Calu3 (cell line): ENCODE measurements at regions of chr1 and their contacts with region 1.

Region 1: GRCh38 chr1:182781841-182782586 is 7.6 kb upstream of the NPL start:
- DNase-seq: peak; percentile 80
- H3K4me3 Mint-ChIP-seq: no peak overlapping the region
- H3K27ac Mint-ChIP-seq: no peak overlapping the region
- H3K4me1 Mint-ChIP-seq: peaks cover 10% of the 10 kb centered on the region
- H3K27me3 Mint-ChIP-seq: peaks cover 7% of the 10 kb centered on the region
- CTCF ChIP-seq: peak; percentile 83

Region 2: GRCh38 chr1:182446033-182446669 is 335.9 kb before region 1 on chr1:
- CTCF ChIA-PET with region 1: no interaction called
- intact Hi-C with region 1: loop called (anchors 1 kb)
- DNase-seq: peak; percentile 60
- H3K4me3 Mint-ChIP-seq: no peak overlapping the region
- H3K27ac Mint-ChIP-seq: no peak overlapping the region
- H3K4me1 Mint-ChIP-seq: no peaks in the 10 kb centered on the region
- H3K27me3 Mint-ChIP-seq: peaks cover 40% of the 10 kb centered on the region
- CTCF ChIP-seq: peak; percentile 55

Region 3: GRCh38 chr1:182604169-182605164 is 177.5 kb before region 1 on chr1 and contains the start of gene RGS16:
- CTCF ChIA-PET with region 1: interaction called, 226 read pairs
- intact Hi-C with region 1: loop called (anchors 1 kb)
- DNase-seq: peak; percentile 95
- H3K4me3 Mint-ChIP-seq: peak within 1 kb of the TSS; percentile 77
- H3K27ac Mint-ChIP-seq: no peak within 1 kb of the TSS
- H3K4me1 Mint-ChIP-seq: peaks cover 7% of the 10 kb centered on the region
- H3K27me3 Mint-ChIP-seq: peaks cover 30% of the 10 kb centered on the region
- CTCF ChIP-seq: no peak
- total RNA-seq, gene RGS16: 1.2 and 1.7 TPM in 2 replicates

Region 4: DNA sequence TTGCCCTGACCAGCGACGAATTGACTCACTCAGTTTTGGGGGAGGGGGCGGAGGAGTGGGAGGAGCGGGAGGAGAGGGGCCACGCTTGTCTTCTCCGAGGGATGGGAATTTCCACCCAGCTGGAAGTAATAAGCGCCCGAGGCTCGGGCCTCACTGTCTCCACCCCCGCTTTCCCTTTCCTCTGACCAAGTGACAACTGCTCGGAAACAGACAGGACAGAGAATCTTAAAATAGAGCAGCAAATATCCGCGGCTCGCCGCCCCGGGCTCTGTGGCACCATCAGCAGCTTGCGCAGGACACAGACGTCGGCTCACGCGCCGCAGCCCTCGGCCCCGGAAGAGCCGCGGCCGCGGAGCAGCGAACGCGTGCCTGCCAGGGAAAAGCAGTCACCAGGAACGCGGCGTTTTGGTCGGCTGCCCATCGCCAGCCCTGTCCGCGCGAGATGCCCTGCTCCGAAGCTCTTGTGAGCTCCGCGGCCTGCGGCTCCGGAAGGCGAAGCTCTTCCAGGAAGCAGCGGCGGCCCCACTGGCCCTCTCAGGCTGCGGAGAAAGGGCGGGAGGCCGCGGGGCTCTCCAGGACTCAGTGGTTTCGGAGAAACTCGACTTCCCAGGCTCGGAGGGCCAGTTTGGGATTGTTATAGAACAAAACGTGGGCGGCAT is 167.1 kb before region 1 on chr1:
- CTCF ChIA-PET with region 1: interaction called, 7 read pairs
- intact Hi-C with region 1: loop called (anchors 5 kb)
- DNase-seq: peak; percentile 46
- H3K4me3 Mint-ChIP-seq: peak overlapping the region; percentile 79
- H3K27ac Mint-ChIP-seq: no peak overlapping the region
- H3K4me1 Mint-ChIP-seq: peaks cover 34% of the 10 kb centered on the region
- H3K27me3 Mint-ChIP-seq: peaks cover 40% of the 10 kb centered on the region
- CTCF ChIP-seq: no peak

Region 5: DNA sequence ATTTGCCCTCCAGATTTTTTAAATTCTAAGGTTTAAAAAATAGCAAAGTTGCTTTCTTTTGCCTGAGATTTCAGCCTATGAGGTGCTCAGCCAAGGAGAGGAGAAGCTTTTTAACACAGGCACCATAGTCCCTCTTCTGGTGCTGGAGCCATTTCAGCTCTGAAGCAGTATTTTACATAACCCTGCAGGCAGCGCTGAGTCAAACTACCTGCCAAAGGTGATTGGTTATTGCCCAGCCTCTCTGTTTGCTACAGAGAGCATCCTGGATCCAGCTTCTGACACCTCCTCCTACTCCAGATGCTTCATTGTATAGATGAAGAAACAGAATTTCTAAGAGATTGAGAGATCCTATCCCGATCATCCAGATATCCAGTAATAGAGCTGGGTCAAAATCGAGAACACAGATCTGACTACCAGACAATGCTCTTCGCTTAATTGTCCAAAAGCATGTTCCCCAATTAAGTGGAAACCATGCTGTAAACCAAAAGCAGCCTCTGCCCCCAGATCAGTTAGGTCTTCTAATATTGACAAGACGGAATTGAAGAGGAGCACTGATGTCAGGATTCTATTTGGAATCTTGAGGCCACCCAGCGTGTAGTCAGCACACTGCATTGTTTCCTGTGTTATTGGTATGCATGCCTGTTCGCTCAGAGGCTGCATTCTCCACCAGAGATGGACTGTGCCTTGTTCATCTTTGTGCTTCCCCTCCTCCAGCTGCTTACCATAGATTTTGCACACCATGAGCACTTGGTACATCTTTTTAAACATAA is 119.7 kb before region 1 on chr1:
- CTCF ChIA-PET with region 1: no interaction called
- intact Hi-C with region 1: no loop called
- DNase-seq: no peak
- H3K4me3 Mint-ChIP-seq: no peak overlapping the region
- H3K27ac Mint-ChIP-seq: no peak overlapping the region
- H3K4me1 Mint-ChIP-seq: no peaks in the 10 kb centered on the region
- H3K27me3 Mint-ChIP-seq: peaks cover 70% of the 10 kb centered on the region
- CTCF ChIP-seq: no peak

Region 6: GRCh38 chr1:182677397-182678098 is 104.5 kb before region 1 on chr1:
- CTCF ChIA-PET with region 1: interaction called, 5 read pairs
- intact Hi-C with region 1: loop called (anchors 5 kb)
- DNase-seq: no peak
- H3K4me3 Mint-ChIP-seq: no peak overlapping the region
- H3K27ac Mint-ChIP-seq: no peak overlapping the region
- H3K4me1 Mint-ChIP-seq: no peaks in the 10 kb centered on the region
- H3K27me3 Mint-ChIP-seq: peaks cover 49% of the 10 kb centered on the region
- CTCF ChIP-seq: no peak

Region 7: GRCh38 chr1:182761396-182762395 is 20.3 kb before region 1 on chr1:
- CTCF ChIA-PET with region 1: no interaction called
- intact Hi-C with region 1: no loop called
- DNase-seq: no peak
- H3K4me3 Mint-ChIP-seq: no peak overlapping the region
- H3K27ac Mint-ChIP-seq: no peak overlapping the region
- H3K4me1 Mint-ChIP-seq: no peaks in the 10 kb centered on the region
- H3K27me3 Mint-ChIP-seq: peaks cover 49% of the 10 kb centered on the region
- CTCF ChIP-seq: no peak